Left ventricle myocardium superior (tissue), 1 donor: ENCODE measurements at regions of chr11 and their contacts with region 1.

Region 1: GRCh38 chr11:20127671-20128527 is 32.4 kb downstream of the DBX1 start:
- DNase-seq: peak; percentile 80
- ATAC-seq: peak; percentile 82

Region 2: GRCh38 chr11:19938169-19938856 is 189.6 kb before region 1 on chr11:
- intact Hi-C with region 1: loop called (anchors 5 kb)
- DNase-seq: peak; percentile 60
- ATAC-seq: peak; percentile 74

Region 3: GRCh38 chr11:20193307-20193706 is 65.4 kb after region 1 on chr11:
- intact Hi-C with region 1: no loop called
- DNase-seq: no peak
- ATAC-seq: no peak

Region 4: GRCh38 chr11:20355221-20356219 is 227.6 kb after region 1 on chr11:
- intact Hi-C with region 1: loop called (anchors 10 kb)
- DNase-seq: no peak
- ATAC-seq: peak; percentile 45

Region 5: DNA sequence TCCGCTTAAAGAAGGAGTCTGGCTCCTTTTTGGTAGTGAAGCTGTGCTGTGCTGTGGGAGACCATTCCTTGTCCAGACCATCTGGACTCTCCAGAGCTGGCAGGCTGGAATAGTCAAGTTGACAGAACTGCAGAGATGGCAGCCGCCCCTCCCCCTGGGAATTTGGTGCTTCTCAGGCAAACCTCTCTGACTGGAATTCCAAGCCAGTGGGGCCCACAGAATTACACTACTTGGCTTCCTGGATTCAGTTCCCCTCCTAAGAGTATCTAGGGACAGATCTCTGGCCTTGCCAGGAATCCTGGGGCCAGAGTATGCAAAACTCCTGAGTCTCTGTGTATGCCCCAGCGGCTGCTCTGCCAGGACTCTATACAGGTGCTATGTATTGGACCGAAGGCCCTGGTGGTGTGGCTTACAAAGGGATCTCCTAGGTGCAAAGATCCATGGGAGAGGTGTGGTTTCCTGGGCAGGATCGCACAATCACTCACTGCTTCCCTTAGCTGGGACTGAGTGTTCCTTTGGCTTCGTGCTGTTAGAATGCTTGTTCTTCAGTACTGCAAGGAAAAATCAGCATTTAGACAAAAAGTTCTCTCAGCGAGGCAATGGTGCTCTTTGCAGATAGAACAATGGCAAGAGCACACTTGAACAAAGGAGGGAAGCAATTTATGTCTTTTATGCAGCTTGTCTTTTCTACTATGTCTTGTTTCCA is 346.4 kb after region 1 on chr11:
- intact Hi-C with region 1: no loop called
- DNase-seq: no peak
- ATAC-seq: peak; percentile 86